Endothelial cell of umbilical vein (primary cell): ENCODE measurements at regions of chr3 and their contacts with region 1.

Region 1: GRCh38 chr3:186849374-186849975 is 7.0 kb downstream of the ADIPOQ start:
- DNase-seq: peak; percentile 74
- H3K4me3 ChIP-seq: no peak overlapping the region
- H3K27ac ChIP-seq: no peak overlapping the region
- H3K4me1 ChIP-seq: no peaks in the 10 kb centered on the region
- H3K27me3 ChIP-seq: no peaks in the 10 kb centered on the region
- CTCF ChIP-seq: peak; percentile 3 to 20
- POLR2A ChIP-seq: no peak

Region 2: DNA sequence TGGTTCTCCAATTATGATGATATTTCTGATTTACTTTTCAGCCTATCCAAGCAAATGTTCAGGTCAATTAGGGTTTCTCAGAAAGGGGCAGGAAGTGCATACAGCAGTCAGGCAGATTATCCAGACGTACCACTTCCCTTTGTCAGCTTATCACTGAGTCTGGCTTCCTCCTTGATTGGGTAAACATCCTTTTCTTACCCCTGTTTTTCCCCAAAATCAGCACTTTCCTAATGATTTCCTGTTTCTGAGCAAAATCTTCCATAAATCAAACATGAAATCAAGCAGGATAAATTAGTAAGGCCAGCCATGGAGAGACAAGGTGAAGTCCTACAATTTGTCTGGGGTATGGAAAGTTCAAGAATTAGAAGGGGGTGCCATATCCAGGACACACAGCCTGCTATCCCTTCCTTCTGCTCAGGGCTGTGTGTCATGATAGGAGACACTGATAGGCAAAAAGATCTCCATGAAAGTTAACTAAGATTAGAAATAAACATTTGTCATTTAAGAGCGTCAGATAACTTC is 22.0 kb after region 1 on chr3:
- CTCF ChIA-PET with region 1: interaction called, 11 read pairs
- POLR2A ChIA-PET with region 1: no interaction called
- dilution Hi-C with region 1: no loop called
- intact Hi-C with region 1: no loop called
- DNase-seq: peak; percentile 94
- H3K4me3 ChIP-seq: peak overlapping the region in 1 of 3 experiments; percentile 2
- H3K27ac ChIP-seq: peak overlapping the region; percentile 65
- H3K4me1 ChIP-seq: peaks cover 34% of the 10 kb centered on the region
- H3K27me3 ChIP-seq: no peaks in the 10 kb centered on the region
- CTCF ChIP-seq: no peak
- POLR2A ChIP-seq: peak; percentile 38

Region 3: GRCh38 chr3:186959029-186959624 is 109.7 kb after region 1 on chr3:
- CTCF ChIA-PET with region 1: interaction called, 19 read pairs
- POLR2A ChIA-PET with region 1: no interaction called
- dilution Hi-C with region 1: no loop called
- intact Hi-C with region 1: no loop called
- DNase-seq: no peak
- H3K4me3 ChIP-seq: no peak overlapping the region
- H3K27ac ChIP-seq: no peak overlapping the region
- H3K4me1 ChIP-seq: no peaks in the 10 kb centered on the region
- H3K27me3 ChIP-seq: no peaks in the 10 kb centered on the region
- CTCF ChIP-seq: no peak
- POLR2A ChIP-seq: no peak

Region 4: DNA sequence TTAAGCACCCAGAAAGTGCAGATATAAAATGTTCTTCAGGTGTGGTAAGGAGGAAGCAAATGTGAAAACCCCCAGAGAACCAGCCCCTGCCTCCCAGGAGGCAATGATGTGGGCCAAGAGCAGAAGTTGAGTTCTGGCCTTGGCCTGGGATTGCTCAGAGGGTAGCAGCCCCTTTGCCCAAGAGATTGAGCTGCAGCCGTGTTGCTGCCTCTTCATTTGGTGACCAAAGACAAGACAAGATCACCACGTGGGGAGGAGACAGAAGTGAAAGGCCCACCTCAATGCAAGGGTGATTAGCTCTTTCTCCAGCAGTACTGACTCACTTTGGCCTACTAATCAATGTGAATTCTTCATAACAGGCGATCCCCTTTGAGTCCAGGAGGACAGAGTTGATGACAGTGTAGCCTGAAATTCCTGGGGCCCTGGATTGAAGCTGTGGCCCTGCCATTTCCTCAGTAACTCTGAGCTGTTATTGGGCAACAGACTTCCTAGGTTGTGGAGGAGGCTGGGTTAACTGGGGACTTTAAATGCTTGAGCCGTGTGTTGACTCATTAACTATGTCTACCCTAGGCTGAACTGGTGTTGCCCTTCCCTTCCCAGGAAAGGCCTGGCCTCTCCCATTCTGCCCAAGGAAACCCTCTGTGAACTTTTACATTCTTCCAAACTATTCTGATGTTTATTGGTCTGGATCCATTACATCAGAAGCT is 167.3 kb after region 1 on chr3:
- CTCF ChIA-PET with region 1: interaction called, 7 read pairs
- POLR2A ChIA-PET with region 1: no interaction called
- dilution Hi-C with region 1: no loop called
- intact Hi-C with region 1: loop called (anchors 5 kb)
- DNase-seq: peak; percentile 92
- H3K4me3 ChIP-seq: no peak overlapping the region
- H3K27ac ChIP-seq: peak overlapping the region; percentile 43
- H3K4me1 ChIP-seq: peaks cover 59% of the 10 kb centered on the region
- H3K27me3 ChIP-seq: no peaks in the 10 kb centered on the region
- CTCF ChIP-seq: no peak
- POLR2A ChIP-seq: peak; percentile 27

Region 5: DNA sequence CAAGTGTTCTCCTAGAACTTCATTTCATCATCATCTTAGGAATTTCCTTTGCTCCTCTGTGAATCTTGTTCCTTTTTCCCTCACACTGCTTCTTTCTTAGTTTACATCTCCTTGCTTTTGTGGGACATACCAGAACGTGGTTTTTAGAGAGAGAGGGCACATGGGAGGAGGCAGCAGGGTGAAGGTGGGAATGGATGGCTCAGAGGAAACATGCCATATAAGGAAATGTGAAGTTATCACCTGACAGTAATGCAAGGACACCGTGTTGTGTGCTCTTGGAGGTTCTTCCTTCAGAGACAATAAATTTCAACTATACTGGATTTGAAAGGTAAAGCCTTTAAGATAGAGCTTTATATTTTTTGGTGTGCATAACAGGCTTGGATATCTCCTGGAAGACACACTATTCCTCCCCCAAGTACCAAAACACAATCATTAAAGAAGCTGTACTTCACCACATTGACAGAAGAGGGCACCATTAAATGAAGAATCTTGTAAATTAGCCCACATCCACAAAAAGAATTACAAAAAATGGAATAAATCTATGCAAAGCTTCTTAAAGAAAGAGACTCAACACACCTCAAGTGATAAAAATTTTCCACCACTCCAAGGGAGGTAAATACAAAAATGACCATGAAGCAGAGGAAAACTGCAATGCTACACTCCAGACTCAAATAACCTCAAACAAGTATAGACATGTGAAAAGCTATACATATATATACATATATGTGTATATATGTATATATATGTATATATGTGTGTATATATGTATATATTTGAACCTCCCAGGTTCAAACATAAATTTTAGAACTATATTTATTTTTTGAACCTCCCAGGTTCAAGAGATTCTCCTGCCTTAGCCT is 263.7 kb after region 1 on chr3:
- CTCF ChIA-PET with region 1: interaction called, 38 read pairs
- POLR2A ChIA-PET with region 1: no interaction called
- dilution Hi-C with region 1: no loop called
- intact Hi-C with region 1: loop called (anchors 1 kb)
- DNase-seq: peak; percentile 64
- H3K4me3 ChIP-seq: no peak overlapping the region
- H3K27ac ChIP-seq: no peak overlapping the region
- H3K4me1 ChIP-seq: no peaks in the 10 kb centered on the region
- H3K27me3 ChIP-seq: no peaks in the 10 kb centered on the region
- CTCF ChIP-seq: peak; percentile 30 to 39
- POLR2A ChIP-seq: no peak

Region 6: DNA sequence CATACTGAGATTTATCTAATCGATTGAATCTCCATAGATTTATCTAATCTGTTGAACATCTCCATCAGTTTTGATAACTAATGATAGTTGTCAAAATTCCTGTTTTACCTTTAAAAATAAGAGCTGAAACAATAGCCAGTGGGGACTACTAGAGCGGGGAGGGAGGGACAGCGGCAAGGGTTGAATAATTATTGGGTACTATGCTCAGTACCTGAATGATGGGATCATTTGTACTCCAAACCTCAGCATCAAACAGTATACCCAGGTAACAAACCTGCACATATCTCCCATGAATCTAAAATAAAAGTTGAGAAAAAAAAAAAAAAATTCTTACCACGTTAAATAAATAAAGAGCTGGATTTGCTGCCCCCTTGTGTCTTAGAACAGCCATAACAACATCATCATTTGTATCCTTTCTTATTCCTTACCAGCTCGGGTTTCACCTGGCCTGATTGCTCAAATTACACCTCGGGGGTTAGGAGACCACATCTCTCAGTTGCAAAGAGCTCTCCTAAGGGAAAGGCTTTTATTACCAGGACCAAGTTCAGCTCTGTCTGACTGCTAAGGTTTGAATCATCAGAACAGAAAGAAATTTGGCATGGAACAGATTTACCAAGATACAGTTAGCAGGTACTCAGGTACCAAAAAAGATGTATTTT is 315.5 kb after region 1 on chr3:
- CTCF ChIA-PET with region 1: interaction called, 207 read pairs
- POLR2A ChIA-PET with region 1: no interaction called
- dilution Hi-C with region 1: no loop called
- intact Hi-C with region 1: loop called (anchors 1 kb)
- DNase-seq: peak; percentile 62
- H3K4me3 ChIP-seq: no peak overlapping the region
- H3K27ac ChIP-seq: no peak overlapping the region
- H3K4me1 ChIP-seq: no peaks in the 10 kb centered on the region
- H3K27me3 ChIP-seq: peaks cover 17 to 28% of the 10 kb centered on the region in 2 experiments
- CTCF ChIP-seq: peak; percentile 54 to 61
- POLR2A ChIP-seq: no peak